Activated T-helper 1 cell treated with anti-CD3 and anti-CD28 coated beads, Interleukin-12 subunit alpha, Interleukin-12 subunit beta, Interleukin-2, Interleukin-4 antibody, amounts not matched to agents 30 ng/mL and 10 ng/mL and 1 ng/mL, durations not matched to agents 14 hours and 24 hours and 36 hours (primary cell): ENCODE measurements at regions of chr3 and their contacts with region 1.

Region 1: GRCh38 chr3:107938143-107938542 is 152.7 kb downstream of the CD47 start:
- DNase-seq: no peak
- H3K4me3 Mint-ChIP-seq: no peak overlapping the region
- H3K27ac Mint-ChIP-seq: no peak overlapping the region
- H3K4me1 Mint-ChIP-seq: peaks cover 17% of the 10 kb centered on the region
- H3K27me3 Mint-ChIP-seq: peaks cover 5% of the 10 kb centered on the region

Region 2: GRCh38 chr3:107910713-107911259 is 27.4 kb before region 1 on chr3:
- intact Hi-C with region 1: loop called (anchors 2 kb)
- DNase-seq: no peak
- H3K4me3 Mint-ChIP-seq: no peak overlapping the region
- H3K27ac Mint-ChIP-seq: no peak overlapping the region
- H3K4me1 Mint-ChIP-seq: peaks cover 20% of the 10 kb centered on the region
- H3K27me3 Mint-ChIP-seq: peaks cover 6% of the 10 kb centered on the region

Region 3: DNA sequence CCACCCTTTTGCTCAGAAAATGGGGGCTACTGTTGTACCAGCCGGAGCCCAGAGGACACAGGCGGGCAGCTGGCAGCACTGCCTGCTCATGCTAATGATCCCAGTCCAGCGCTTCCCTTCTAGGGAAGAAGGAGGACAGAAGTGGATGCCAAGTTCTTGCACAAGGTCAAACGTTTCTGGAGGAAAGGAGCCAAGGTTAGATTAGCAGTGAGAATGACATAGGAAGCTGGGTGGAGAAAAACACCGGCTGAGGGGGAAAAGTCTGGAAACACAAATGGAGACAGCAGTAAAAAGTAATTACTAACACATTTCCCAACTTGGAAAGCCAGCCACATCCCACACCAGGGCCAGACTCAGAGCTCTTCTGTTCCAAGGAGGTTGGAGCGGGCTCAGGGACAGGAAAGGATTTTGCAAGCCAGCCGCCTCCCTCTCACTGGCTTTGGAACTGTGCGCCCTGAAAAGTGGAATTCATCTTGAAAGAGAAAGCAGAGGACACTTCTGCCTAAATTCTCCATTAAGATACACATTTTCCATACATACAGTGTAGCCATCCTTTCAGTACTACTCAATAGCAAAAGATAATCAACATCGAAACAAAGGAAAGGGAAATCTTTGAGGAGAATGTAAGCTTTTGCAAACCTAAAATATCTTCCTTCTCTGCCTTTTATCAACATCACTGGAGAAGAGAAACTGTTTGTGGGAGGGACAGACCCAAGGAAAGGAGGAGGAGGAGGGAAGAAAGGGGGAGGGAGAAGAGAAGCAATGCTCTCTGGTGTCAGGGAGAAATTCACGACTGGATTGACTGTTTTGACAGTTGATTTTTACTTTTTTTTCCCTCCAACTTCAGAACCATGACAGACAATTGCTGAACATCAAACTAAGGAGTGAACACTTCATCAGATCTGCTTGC is 19.1 kb after region 1 on chr3:
- intact Hi-C with region 1: no loop called
- DNase-seq: no peak
- H3K4me3 Mint-ChIP-seq: no peak overlapping the region
- H3K27ac Mint-ChIP-seq: no peak overlapping the region
- H3K4me1 Mint-ChIP-seq: peaks cover 11% of the 10 kb centered on the region
- H3K27me3 Mint-ChIP-seq: peaks cover 10% of the 10 kb centered on the region

Region 4: GRCh38 chr3:107981471-107982111 is 43.4 kb after region 1 on chr3:
- intact Hi-C with region 1: loop called (anchors 5 kb)
- DNase-seq: no peak
- H3K4me3 Mint-ChIP-seq: no peak overlapping the region
- H3K27ac Mint-ChIP-seq: no peak overlapping the region
- H3K4me1 Mint-ChIP-seq: peaks cover 32% of the 10 kb centered on the region
- H3K27me3 Mint-ChIP-seq: no peaks in the 10 kb centered on the region

Region 5: GRCh38 chr3:108292905-108293328 is 354.8 kb after region 1 on chr3:
- intact Hi-C with region 1: loop called (anchors 1 kb)
- DNase-seq: no peak
- H3K4me3 Mint-ChIP-seq: peak overlapping the region; percentile 53
- H3K27ac Mint-ChIP-seq: peak overlapping the region; percentile 83
- H3K4me1 Mint-ChIP-seq: peaks cover 64% of the 10 kb centered on the region
- H3K27me3 Mint-ChIP-seq: peaks cover 2% of the 10 kb centered on the region

Region 6: DNA sequence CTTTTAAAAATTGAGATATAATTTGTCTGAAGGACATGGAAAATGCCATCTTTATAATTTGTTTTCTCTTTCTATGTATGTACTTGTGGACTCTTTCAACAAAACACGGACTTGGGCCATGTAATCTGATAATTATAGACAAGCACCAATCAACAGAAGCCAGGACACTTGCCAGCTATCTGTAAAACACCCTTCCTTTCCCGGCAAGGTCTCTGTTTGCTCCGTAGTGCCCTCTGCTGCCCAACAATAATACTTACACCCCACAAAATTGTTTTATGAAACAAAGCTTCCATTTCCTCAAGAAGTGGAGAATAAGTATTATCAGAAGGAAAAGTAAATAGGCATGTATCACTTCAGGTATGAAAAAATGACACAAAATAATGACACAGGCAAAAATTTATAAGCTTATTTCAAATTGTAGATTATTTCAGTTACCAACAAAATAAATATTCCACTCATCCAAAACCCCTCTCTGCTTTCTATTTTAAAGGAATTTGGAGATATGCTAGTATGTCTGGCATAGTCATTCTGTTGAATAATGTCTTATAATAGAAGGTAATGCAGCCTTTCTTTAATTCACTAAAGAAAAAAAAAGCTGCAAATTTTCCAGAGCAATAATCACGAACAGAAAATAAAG is 539.5 kb after region 1 on chr3:
- intact Hi-C with region 1: loop called (anchors 1 kb)
- DNase-seq: peak; percentile 50
- H3K4me3 Mint-ChIP-seq: no peak overlapping the region
- H3K27ac Mint-ChIP-seq: no peak overlapping the region
- H3K4me1 Mint-ChIP-seq: no peaks in the 10 kb centered on the region
- H3K27me3 Mint-ChIP-seq: peaks cover 13% of the 10 kb centered on the region